Heart right ventricle (tissue), 16 donors: ENCODE measurements at regions of chr16 and their contacts with region 1.

Region 1: DNA sequence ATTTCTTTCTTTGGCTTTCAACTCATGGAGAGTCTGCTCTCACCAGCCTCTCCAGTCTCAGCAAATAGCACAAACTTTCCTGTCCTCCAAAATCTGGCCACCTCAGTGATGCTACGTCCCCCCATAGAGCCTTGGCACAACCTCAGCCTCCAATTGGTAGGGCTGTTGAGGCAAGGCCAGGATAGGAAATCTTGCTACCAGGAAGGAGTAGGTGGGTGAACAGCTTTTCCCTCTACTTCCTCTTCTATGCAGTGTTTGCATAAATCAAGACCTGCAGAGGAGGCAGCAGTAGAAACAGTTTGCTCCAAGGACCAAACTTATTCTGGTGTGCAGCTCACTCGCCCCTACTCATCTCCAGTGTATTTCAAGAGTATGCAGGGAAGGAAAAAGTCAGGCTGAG is 701 bp upstream of the DPEP2 start:
- DNase-seq: no peak
- ATAC-seq: peak in 7 of 8 donors; percentile 43 to 65 (median 54)
- H3K4me3 ChIP-seq: peak overlapping the region in 4 of 10 donors; percentile 4 to 54 (median 18)
- H3K27ac ChIP-seq: peak overlapping the region in 8 of 10 donors; percentile 12 to 93 (median 66)
- H3K4me1 ChIP-seq: peaks cover 0 to 53% (median 14%) of the 10 kb centered on the region in 9 donors
- H3K27me3 ChIP-seq: no peaks in the 10 kb centered on the region
- CTCF ChIP-seq: no peak

Region 2: GRCh38 chr16:67781565-67781921 is 218.4 kb before region 1 on chr16:
- intact Hi-C with region 1: no loop called
- DNase-seq: no peak
- ATAC-seq: peak in 7 of 8 donors; percentile 11 to 74 (median 65)
- H3K4me3 ChIP-seq: no peak overlapping the region
- H3K27ac ChIP-seq: peak overlapping the region in 3 of 10 donors; percentile 6 to 21 (median 15)
- H3K4me1 ChIP-seq: peaks cover 0 to 33% (median 23%) of the 10 kb centered on the region in 9 donors
- H3K27me3 ChIP-seq: no peaks in the 10 kb centered on the region
- CTCF ChIP-seq: no peak

Region 3: DNA sequence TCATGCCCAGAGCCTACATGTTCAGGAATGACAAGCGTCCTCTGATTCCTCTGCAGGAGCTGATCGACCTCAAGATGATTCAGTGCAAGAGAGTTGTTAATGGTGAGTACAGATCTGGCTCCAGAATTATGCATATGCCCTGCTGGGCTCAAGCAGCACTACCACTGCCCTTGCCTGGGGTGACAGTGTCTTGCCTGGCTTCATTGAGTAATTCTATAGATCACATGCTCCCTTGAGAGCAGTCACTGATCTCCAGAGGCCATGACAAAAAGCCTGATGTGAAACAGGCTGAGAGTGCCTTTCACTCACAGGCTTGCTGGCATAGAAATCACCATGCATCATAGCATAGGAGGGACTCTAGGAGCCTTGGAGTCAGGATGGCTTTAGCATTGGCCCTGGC is 49.5 kb after region 1 on chr16:
- intact Hi-C with region 1: loop called in 1 of 10 experiments (anchors 5 kb)
- DNase-seq: no peak
- ATAC-seq: no peak
- H3K4me3 ChIP-seq: no peak overlapping the region
- H3K27ac ChIP-seq: no peak overlapping the region
- H3K4me1 ChIP-seq: peaks cover 0 to 19% (median 0%) of the 10 kb centered on the region in 9 donors
- H3K27me3 ChIP-seq: no peaks in the 10 kb centered on the region
- CTCF ChIP-seq: no peak

Region 4: DNA sequence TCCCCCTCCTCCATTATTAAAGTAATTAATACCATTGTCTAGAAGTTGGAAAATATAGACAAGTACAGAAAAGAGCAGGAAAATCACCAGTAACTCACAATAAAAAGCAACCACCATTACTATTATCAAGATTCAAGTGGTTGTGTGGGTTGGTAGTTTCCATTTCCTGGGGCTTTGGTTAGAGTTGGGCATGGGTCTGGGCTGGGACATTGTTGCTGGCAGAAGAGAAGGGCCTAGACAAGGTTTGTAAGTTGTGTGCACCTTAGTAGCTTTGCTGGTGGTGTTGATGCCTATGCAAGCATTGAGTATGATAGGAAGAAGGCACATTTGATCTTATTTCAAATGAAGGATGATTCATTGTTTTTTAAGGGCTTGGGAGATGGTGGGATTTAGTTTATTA is 59.8 kb after region 1 on chr16:
- intact Hi-C with region 1: loop called in 1 of 10 experiments (anchors 2 kb)
- DNase-seq: no peak
- ATAC-seq: no peak
- H3K4me3 ChIP-seq: no peak overlapping the region
- H3K27ac ChIP-seq: peak overlapping the region in 4 of 10 donors; percentile 18 to 57 (median 46)
- H3K4me1 ChIP-seq: peaks cover 3 to 48% (median 12%) of the 10 kb centered on the region in 9 donors
- H3K27me3 ChIP-seq: no peaks in the 10 kb centered on the region
- CTCF ChIP-seq: no peak